ENCODE measurements at regions of chr6 and their contacts with region 1.

Region 1: DNA sequence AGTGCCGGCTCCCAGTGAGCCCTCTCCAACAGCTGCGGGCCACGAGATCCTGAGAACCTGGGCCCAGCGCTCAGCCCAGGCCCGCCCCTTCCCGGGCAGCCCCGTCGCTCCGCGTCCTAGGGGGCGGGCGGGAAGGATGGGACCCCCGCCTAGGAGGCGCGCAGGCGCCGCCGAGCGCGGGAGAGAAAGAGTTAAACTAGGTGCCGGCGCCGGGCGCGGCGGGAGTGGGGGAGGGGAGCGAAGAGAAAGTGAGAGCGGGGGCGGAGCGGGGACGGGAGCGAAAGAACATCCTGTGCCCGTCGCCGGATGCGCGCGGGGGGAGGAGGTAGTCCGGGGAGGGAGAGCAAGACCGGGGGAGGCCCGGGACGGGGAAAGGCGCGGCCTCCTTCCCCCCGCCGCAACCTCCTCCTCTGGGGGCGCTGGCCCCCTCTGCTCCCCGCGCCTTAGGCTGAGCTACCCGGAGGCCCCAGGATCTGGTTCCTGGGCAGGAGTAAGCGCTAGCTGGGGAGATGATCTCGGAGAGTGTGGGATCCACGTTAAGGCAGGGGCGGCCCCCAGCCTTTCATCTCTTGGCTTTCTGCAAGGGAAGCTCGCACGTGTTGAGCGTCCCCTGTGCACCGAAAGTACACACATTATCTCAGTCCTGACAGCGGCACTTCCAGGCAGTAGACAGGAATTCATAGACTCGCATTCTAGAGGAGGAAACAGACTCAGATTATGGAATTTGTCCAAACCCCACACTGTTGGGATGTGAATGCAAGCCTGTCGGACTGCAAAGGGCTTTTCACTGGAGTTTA is 4.9 kb upstream of the ARMC12 start:
- DNase-seq: peak; percentile 88 to 98 (median 94)
- ATAC-seq: peak; percentile 55
- H3K4me3 ChIP-seq: peak overlapping the region; percentile 87
- H3K4me3 Mint-ChIP-seq: peak overlapping the region; percentile 96
- H3K27ac ChIP-seq: peak overlapping the region; percentile 94 to 96
- H3K27ac Mint-ChIP-seq: peak overlapping the region; percentile 87
- H3K4me1 ChIP-seq: peaks cover 97% of the 10 kb centered on the region
- H3K4me1 Mint-ChIP-seq: peaks cover 92% of the 10 kb centered on the region
- H3K27me3 ChIP-seq: no peaks in the 10 kb centered on the region
- H3K27me3 Mint-ChIP-seq: no peaks in the 10 kb centered on the region
- CTCF ChIP-seq: no peak

Region 2: GRCh38 chr6:35452186-35453090 is 279.5 kb before region 1 on chr6 and contains the start of gene FANCE:
- CTCF ChIA-PET with region 1: no interaction called
- POLR2A ChIA-PET with region 1: interaction called, 3 read pairs
- intact Hi-C with region 1: loop called in 1 of 2 experiments (anchors 5 kb)
- DNase-seq: peak; percentile 67 to 95 (median 84)
- ATAC-seq: peak; percentile 75
- H3K4me3 ChIP-seq: peak within 1 kb of the TSS; percentile 68
- H3K4me3 Mint-ChIP-seq: peak within 1 kb of the TSS; percentile 89
- H3K27ac ChIP-seq: peak within 1 kb of the TSS; percentile 27 to 55
- H3K27ac Mint-ChIP-seq: peak within 1 kb of the TSS; percentile 77
- H3K4me1 ChIP-seq: peaks cover 34% of the 10 kb centered on the region
- H3K4me1 Mint-ChIP-seq: peaks cover 43% of the 10 kb centered on the region
- H3K27me3 ChIP-seq: no peaks in the 10 kb centered on the region
- H3K27me3 Mint-ChIP-seq: no peaks in the 10 kb centered on the region
- CTCF ChIP-seq: no peak
- total RNA-seq, gene FANCE: 1.6 to 1.7 TPM

Region 3: DNA sequence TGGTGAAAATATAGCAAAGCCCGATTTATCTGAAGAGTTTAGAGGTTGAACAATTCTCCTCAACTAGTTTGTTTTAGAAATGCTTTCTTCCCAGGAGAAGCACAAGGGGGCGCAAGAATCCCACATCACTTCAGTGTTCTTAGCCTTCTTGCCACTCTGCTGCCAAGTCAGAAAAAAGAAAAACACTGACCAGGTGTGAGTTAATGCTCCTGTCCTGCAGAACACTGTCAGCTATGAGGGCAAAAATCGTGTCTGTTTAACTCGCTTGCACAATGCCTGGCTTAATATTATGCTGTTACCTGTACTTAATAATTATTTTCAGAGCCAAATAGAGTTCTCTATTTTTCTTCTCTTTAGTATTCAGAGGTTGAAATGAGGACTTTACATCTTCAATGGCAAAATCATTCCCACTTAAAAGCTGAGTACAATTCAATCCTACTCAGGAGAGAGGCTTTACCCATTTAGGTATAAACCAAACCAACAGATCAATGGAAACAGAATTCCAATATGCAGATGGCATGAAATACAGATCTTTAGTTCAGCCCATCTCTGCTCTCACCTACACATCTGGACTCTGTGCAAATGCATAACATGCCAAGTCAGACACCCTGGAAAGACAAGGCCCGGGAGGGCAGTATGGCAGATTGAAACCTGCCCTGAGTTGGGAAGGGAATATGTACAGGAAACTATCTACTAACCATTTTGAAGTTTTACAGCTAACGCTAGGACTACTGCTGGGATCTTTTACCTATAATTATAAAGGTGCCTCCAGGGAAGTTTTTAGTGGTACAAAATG is 147.8 kb before region 1 on chr6:
- CTCF ChIA-PET with region 1: interaction called, 60 read pairs
- POLR2A ChIA-PET with region 1: interaction called, 13 read pairs
- intact Hi-C with region 1: loop called (anchors 1 kb)
- DNase-seq: peak; percentile 61 to 89 (median 70)
- ATAC-seq: peak; percentile 81
- H3K4me3 ChIP-seq: no peak overlapping the region
- H3K4me3 Mint-ChIP-seq: peak overlapping the region; percentile 69
- H3K27ac ChIP-seq: no peak overlapping the region
- H3K27ac Mint-ChIP-seq: peak overlapping the region; percentile 80
- H3K4me1 ChIP-seq: peaks cover 33% of the 10 kb centered on the region
- H3K4me1 Mint-ChIP-seq: peaks cover 68% of the 10 kb centered on the region
- H3K27me3 ChIP-seq: no peaks in the 10 kb centered on the region
- H3K27me3 Mint-ChIP-seq: no peaks in the 10 kb centered on the region
- CTCF ChIP-seq: peak; percentile 94

Region 4: GRCh38 chr6:35624341-35625070 is 107.4 kb before region 1 on chr6:
- CTCF ChIA-PET with region 1: interaction called, 44 read pairs
- POLR2A ChIA-PET with region 1: interaction called, 23 read pairs
- intact Hi-C with region 1: loop called (anchors 1 kb)
- DNase-seq: peak in 3 of 14 experiments; percentile 65 to 79 (median 78)
- ATAC-seq: peak; percentile 85
- H3K4me3 ChIP-seq: no peak overlapping the region
- H3K4me3 Mint-ChIP-seq: peak overlapping the region; percentile 30
- H3K27ac ChIP-seq: peak overlapping the region in 1 of 2 donors; percentile 29
- H3K27ac Mint-ChIP-seq: peak overlapping the region; percentile 72
- H3K4me1 ChIP-seq: peaks cover 31% of the 10 kb centered on the region
- H3K4me1 Mint-ChIP-seq: peaks cover 60% of the 10 kb centered on the region
- H3K27me3 ChIP-seq: no peaks in the 10 kb centered on the region
- H3K27me3 Mint-ChIP-seq: no peaks in the 10 kb centered on the region
- CTCF ChIP-seq: peak; percentile 81

Region 5: DNA sequence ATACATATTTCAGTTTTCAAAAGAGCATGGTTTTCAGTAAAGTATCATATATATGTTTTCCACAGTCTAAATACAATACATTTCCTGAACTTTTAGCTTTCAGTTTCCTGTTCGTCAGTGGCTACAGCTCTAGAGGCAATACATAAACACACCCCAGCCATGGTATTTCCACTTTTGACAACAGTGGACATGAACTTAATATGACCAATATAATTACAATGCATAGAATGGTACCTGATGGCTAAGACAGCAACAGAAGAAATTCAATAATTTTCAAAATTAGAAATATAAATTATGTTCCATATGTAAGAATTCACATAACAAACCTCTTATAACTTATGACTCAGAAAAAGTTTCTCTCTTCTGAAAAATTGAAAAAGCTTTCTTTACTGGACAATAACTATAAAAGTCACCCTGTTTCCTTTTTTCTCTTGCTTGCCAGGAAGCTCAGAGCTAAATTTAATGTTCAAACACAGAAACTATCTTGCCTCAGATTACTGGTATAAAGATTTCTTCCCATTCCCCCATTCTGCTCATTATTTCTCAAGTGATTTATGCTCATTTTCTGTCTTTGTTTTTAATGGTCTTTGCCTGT is 62.4 kb before region 1 on chr6:
- CTCF ChIA-PET with region 1: interaction called, 17 read pairs
- POLR2A ChIA-PET with region 1: interaction called, 11 read pairs
- intact Hi-C with region 1: loop called in 1 of 2 experiments (anchors 2 kb)
- DNase-seq: peak in 3 of 14 experiments; percentile 48 to 69 (median 57)
- ATAC-seq: peak; percentile 72
- H3K4me3 ChIP-seq: peak overlapping the region; percentile 25
- H3K4me3 Mint-ChIP-seq: peak overlapping the region; percentile 82
- H3K27ac ChIP-seq: peak overlapping the region; percentile 26 to 58
- H3K27ac Mint-ChIP-seq: peak overlapping the region; percentile 91
- H3K4me1 ChIP-seq: peaks cover 51% of the 10 kb centered on the region
- H3K4me1 Mint-ChIP-seq: peaks cover 57% of the 10 kb centered on the region
- H3K27me3 ChIP-seq: no peaks in the 10 kb centered on the region
- H3K27me3 Mint-ChIP-seq: no peaks in the 10 kb centered on the region
- CTCF ChIP-seq: no peak

Region 6: DNA sequence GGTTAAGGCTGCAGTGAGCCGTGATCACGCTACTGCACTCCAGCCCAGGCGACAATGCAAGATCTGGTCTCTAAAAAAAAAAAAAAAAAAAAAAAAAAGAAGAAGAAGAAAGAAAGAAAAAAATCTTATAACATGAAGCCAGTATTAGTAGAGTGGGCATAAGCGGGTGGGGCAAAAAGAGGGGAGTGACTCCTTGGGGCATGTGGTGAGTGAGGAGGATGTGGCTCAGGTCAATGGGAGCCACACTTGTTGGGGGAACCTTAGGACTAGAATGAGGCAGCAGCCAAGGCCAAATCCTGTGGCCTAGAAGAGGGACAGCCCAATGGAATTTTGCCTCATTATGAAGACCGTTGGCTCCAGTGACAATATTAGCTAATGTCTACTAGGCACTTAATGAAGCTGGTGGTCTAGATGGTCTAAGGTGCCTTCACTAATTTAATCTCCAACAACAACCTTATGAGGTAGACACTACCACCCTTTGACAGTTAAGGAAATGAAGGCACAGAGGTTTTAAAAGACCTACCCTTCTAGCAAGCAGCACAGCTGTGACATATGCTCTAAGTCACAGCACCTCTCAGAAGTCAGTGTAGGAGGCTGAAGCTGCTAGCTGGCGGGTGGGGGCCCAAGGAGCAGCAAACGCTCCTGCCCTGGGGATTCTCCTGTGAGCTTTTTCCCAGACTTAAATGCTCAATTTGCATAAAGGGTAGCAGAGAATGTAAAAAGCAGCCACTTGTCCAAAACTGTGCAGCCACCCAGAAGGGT is 18.7 kb before region 1 on chr6:
- CTCF ChIA-PET with region 1: interaction called, 6 read pairs
- POLR2A ChIA-PET with region 1: interaction called, 7 read pairs
- intact Hi-C with region 1: loop called in 1 of 2 experiments (anchors 2 kb)
- DNase-seq: peak in 1 of 14 experiments; percentile 26
- ATAC-seq: no peak
- H3K4me3 ChIP-seq: no peak overlapping the region
- H3K4me3 Mint-ChIP-seq: no peak overlapping the region
- H3K27ac ChIP-seq: no peak overlapping the region
- H3K27ac Mint-ChIP-seq: no peak overlapping the region
- H3K4me1 ChIP-seq: peaks cover 44% of the 10 kb centered on the region
- H3K4me1 Mint-ChIP-seq: peaks cover 53% of the 10 kb centered on the region
- H3K27me3 ChIP-seq: no peaks in the 10 kb centered on the region
- H3K27me3 Mint-ChIP-seq: no peaks in the 10 kb centered on the region
- CTCF ChIP-seq: no peak

Measured in CD4-positive, alpha-beta T cell (primary cell).